ENCODE measurements at regions of chr17 and their contacts with region 1.

Region 1: GRCh38 chr17:50094753-50095619 is at the start of gene PDK2:
- DNase-seq: peak; percentile 87
- H3K4me3 ChIP-seq: peak within 1 kb of the TSS; percentile 83
- H3K27ac ChIP-seq: peak within 1 kb of the TSS; percentile 70
- H3K27me3 ChIP-seq: no peaks in the 10 kb centered on the region
- CTCF ChIP-seq: no peak
- polyA plus RNA-seq, gene PDK2: 62.4 and 81.7 TPM in 2 replicates

Region 2: DNA sequence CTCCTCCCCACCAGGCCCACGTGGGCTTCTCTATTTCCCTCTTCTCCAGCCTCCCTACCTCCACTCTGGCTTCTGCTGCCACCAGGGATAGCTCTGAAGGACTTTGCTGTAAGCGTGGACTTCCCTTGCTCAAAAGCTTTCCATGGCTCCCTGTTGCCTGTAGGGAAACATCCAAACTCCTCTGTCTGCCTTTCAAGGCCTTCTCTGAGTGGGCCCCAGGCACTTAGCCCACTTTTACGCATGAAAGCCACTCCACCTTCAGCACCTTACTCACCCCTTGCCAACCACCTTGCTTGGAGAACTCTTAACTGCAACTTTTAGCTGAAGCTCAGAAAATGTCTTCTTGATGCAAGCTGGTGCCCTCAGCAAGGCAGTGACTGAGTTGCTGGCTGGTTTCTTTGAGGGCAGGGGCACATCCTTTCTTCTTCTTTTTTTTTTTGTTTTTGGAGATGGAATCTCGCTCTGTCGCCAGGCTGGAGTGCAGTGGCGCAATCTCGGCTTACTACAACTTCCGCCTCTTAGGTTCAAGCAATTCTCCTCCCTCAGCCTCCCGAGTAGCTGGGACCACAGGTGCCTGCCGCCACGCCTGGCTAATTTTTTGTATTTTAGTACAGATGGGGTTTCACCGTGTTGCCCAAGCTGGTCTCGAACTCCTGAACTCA is 178.0 kb before region 1 on chr17:
- CTCF ChIA-PET with region 1: no interaction called
- POLR2A ChIA-PET with region 1: no interaction called
- DNase-seq: no peak
- H3K4me3 ChIP-seq: no peak overlapping the region
- H3K27ac ChIP-seq: no peak overlapping the region
- H3K27me3 ChIP-seq: peaks cover 59% of the 10 kb centered on the region
- CTCF ChIP-seq: no peak

Region 3: GRCh38 chr17:50020841-50021599 is 74.0 kb before region 1 on chr17:
- CTCF ChIA-PET with region 1: interaction called, 32 read pairs
- POLR2A ChIA-PET with region 1: no interaction called
- DNase-seq: no peak
- H3K4me3 ChIP-seq: no peak overlapping the region
- H3K27ac ChIP-seq: no peak overlapping the region
- H3K27me3 ChIP-seq: peaks cover 3% of the 10 kb centered on the region
- CTCF ChIP-seq: no peak

Region 4: GRCh38 chr17:50055426-50056230 is 39.4 kb before region 1 on chr17 and contains the start of gene ITGA3:
- CTCF ChIA-PET with region 1: interaction called, 28 read pairs
- POLR2A ChIA-PET with region 1: no interaction called
- DNase-seq: no peak
- H3K4me3 ChIP-seq: peak within 1 kb of the TSS; percentile 77
- H3K27ac ChIP-seq: peak within 1 kb of the TSS; percentile 73
- H3K27me3 ChIP-seq: no peaks in the 10 kb centered on the region
- CTCF ChIP-seq: no peak
- polyA plus RNA-seq, gene ITGA3: 39.9 and 62.4 TPM in 2 replicates

Region 5: DNA sequence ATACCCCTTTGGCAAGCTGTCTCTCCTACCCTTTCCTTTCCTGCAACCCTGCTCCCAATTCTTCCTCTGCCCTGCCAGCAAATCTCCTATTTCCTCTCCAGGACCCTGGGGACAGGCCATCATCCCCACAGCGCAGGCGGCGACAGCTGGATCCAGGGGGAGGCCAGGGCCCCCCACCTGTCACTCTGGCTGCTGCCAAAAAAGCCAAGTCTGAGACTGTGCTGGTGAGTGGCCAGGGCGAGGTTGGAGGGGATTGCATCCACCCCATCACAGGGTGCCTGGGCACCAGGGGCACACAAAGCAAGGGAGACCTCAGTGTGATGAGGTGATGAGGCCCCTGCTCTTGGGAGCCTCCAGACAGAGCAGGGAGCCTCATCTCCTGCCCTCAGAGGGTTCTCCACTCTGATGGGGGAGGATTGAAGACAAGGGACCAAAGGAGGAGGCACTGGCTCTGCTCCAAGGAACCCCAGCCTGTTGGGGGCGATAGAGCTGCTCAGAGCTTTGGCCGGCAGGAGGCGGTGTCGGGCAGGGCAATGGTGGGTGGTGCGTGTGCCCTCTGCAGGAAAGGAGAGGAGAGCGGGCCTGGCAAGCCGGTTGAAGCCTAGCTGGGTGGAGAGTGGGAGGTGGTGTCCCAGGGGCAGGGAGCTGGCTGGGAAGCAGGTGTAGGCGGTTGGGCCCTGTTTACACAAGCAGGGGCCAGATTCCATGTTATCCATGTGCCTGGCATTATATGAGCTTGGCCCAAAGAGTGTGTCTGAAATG is 15.5 kb before region 1 on chr17:
- CTCF ChIA-PET with region 1: interaction called, 24 read pairs
- POLR2A ChIA-PET with region 1: no interaction called
- DNase-seq: no peak
- H3K4me3 ChIP-seq: no peak overlapping the region
- H3K27ac ChIP-seq: peak overlapping the region; percentile 11
- H3K27me3 ChIP-seq: no peaks in the 10 kb centered on the region
- CTCF ChIP-seq: peak; percentile 43

Region 6: DNA sequence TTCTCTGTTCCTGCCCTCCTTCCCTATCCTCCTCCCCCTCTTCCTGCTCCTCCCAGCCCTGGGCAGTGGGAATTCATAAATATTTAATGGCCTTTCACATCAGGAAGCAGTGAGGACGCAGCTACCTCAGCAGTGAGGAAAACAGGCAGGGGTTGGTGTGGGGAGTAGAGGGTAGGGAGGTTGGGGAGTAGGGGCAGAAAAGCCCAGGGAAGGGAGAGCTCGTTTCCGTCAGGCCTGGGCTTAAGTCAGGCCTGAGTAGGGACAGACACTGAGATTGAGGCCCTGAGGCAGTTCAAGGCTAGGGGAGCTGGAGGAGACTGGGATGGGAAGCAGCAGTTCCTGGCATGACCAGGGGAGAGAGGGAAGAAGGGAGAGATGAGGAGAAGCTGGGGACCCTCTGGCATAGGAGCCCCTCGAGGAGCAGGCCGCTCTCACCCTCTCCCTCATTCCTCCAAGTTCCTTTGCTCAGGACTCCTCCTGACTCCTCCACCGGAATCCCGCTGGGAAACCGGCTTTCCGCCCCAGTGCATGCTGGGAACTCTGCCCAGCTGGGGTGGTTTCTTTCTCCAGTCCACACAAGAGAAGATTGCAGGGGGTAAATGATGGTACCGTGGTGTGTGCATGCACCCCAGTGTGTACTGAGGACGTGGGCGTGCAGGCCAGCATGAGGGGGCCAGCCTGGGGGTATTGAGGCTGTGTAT is 28.8 kb after region 1 on chr17:
- CTCF ChIA-PET with region 1: interaction called, 21 read pairs
- POLR2A ChIA-PET with region 1: interaction called, 4 read pairs
- DNase-seq: no peak
- H3K4me3 ChIP-seq: no peak overlapping the region; the same call in 1 of the 2 replicates
- H3K27ac ChIP-seq: peak overlapping the region; percentile 21
- H3K27me3 ChIP-seq: peaks cover 2% of the 10 kb centered on the region
- CTCF ChIP-seq: no peak

Region 7: DNA sequence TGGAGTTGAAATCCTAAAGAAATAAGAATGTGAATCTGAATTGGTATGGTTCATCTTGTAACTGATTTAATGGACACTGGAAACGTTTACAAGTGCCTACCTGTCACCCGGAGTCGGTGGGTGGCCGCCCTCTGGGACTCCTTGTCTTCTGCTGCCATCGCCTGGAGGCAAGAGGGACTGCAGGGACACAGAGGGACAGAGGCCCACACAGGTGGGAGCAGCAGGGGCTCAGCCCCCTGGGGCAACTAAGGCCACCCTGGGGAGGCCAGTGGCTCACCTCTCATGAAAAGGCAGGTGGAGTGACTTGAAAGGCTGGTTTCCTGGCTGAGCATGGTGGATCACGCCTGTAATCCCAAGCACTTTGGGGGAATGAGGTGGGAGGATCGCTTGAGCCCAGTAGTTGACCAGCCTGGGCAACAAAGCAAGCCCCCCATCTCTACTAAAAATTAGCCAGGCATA is 202.4 kb after region 1 on chr17:
- CTCF ChIA-PET with region 1: interaction called, 171 read pairs
- POLR2A ChIA-PET with region 1: no interaction called
- DNase-seq: no peak
- H3K4me3 ChIP-seq: no peak overlapping the region
- H3K27ac ChIP-seq: no peak overlapping the region
- H3K27me3 ChIP-seq: no peaks in the 10 kb centered on the region
- CTCF ChIP-seq: peak; percentile 82

Measured in AG04450 (cell line).